ENCODE measurements at regions of chr3 and their contacts with region 1.

Region 1: GRCh38 chr3:46078712-46079400 is 51.6 kb upstream of the XCR1 start:
- DNase-seq: peak; percentile 94
- H3K4me3 Mint-ChIP-seq: no peak overlapping the region
- H3K27ac Mint-ChIP-seq: no peak overlapping the region
- H3K4me1 Mint-ChIP-seq: peaks cover 14% of the 10 kb centered on the region
- H3K27me3 Mint-ChIP-seq: peaks cover 15% of the 10 kb centered on the region

Region 2: GRCh38 chr3:45929042-45929679 is 149.7 kb before region 1 on chr3:
- CTCF ChIA-PET with region 1: interaction called, 86 read pairs
- DNase-seq: peak; percentile 78
- H3K4me3 Mint-ChIP-seq: no peak overlapping the region
- H3K27ac Mint-ChIP-seq: no peak overlapping the region
- H3K4me1 Mint-ChIP-seq: no peaks in the 10 kb centered on the region
- H3K27me3 Mint-ChIP-seq: no peaks in the 10 kb centered on the region

Region 3: GRCh38 chr3:45962033-45962432 is 116.8 kb before region 1 on chr3:
- CTCF ChIA-PET with region 1: interaction called, 24 read pairs
- DNase-seq: no peak
- H3K4me3 Mint-ChIP-seq: no peak overlapping the region
- H3K27ac Mint-ChIP-seq: no peak overlapping the region
- H3K4me1 Mint-ChIP-seq: peaks cover 54% of the 10 kb centered on the region
- H3K27me3 Mint-ChIP-seq: no peaks in the 10 kb centered on the region

Region 4: GRCh38 chr3:46038916-46039315 is 39.9 kb before region 1 on chr3:
- CTCF ChIA-PET with region 1: no interaction called
- DNase-seq: no peak
- H3K4me3 Mint-ChIP-seq: no peak overlapping the region
- H3K27ac Mint-ChIP-seq: no peak overlapping the region
- H3K4me1 Mint-ChIP-seq: no peaks in the 10 kb centered on the region
- H3K27me3 Mint-ChIP-seq: peaks cover 31% of the 10 kb centered on the region

Region 5: GRCh38 chr3:46154311-46154710 is 75.5 kb after region 1 on chr3:
- CTCF ChIA-PET with region 1: no interaction called
- DNase-seq: no peak
- H3K4me3 Mint-ChIP-seq: no peak overlapping the region
- H3K27ac Mint-ChIP-seq: no peak overlapping the region
- H3K4me1 Mint-ChIP-seq: peaks cover 9% of the 10 kb centered on the region
- H3K27me3 Mint-ChIP-seq: peaks cover 13% of the 10 kb centered on the region

Region 6: GRCh38 chr3:46208167-46208704 is 129.4 kb after region 1 on chr3 and contains the start of gene CCR1:
- CTCF ChIA-PET with region 1: interaction called, 52 read pairs
- DNase-seq: peak; percentile 75
- H3K4me3 Mint-ChIP-seq: peak within 1 kb of the TSS; percentile 51
- H3K27ac Mint-ChIP-seq: peak within 1 kb of the TSS; percentile 81
- H3K4me1 Mint-ChIP-seq: peaks cover 52% of the 10 kb centered on the region
- H3K27me3 Mint-ChIP-seq: peaks cover 12% of the 10 kb centered on the region

Region 7: GRCh38 chr3:46538803-46539442 is 460.1 kb after region 1 on chr3:
- CTCF ChIA-PET with region 1: no interaction called
- DNase-seq: peak; percentile 92
- H3K4me3 Mint-ChIP-seq: peak overlapping the region; percentile 54
- H3K27ac Mint-ChIP-seq: peak overlapping the region; percentile 94
- H3K4me1 Mint-ChIP-seq: peaks cover 83% of the 10 kb centered on the region
- H3K27me3 Mint-ChIP-seq: peaks cover 8% of the 10 kb centered on the region